HepG2 (cell line): ENCODE measurements at regions of chr14 and their contacts with region 1.

Region 1: DNA sequence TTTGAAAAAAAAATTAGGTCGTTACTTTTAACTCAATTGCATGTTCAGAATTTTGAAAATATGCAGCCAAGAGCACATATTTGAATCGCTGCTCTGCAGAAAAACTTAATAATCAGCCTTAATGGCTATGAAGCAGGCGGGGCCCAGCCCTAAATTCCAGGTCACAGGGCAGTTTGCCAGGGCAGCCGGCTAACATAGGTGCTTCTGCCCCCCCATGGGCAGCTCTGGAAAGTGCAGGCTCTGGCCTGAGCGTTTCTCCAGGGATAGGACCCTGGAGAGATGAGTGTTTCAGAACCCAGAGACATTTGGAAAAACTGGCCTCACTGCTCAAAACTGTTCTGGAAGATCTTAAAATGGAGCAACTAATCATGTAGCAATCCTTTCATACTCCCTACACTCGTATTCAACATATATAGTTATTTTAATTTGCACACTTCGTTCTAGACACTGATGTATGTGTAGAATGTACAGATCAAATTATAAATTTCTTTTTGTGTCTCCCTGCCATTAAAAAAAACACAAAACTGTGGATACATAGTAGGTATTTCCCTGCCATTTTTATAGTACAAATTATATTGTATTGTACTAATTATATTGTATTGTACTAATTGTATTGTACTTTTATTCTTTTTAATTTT is 26.0 kb upstream of the PTGR2 start:
- DNase-seq: peak; percentile 69
- ATAC-seq: peak; percentile 92
- H3K4me3 ChIP-seq: no peak overlapping the region
- H3K27ac ChIP-seq: no peak overlapping the region
- H3K4me1 ChIP-seq: peaks cover 15% of the 10 kb centered on the region
- H3K27me3 ChIP-seq: peaks cover 0 to 2% of the 10 kb centered on the region in 2 experiments; a peak in 2 of 5 replicates
- CTCF ChIP-seq: peak; percentile 90
- EP300 ChIP-seq: no peak
- POLR2A ChIP-seq: no peak
- RAD21 ChIP-seq: peak; percentile 94

Region 2: DNA sequence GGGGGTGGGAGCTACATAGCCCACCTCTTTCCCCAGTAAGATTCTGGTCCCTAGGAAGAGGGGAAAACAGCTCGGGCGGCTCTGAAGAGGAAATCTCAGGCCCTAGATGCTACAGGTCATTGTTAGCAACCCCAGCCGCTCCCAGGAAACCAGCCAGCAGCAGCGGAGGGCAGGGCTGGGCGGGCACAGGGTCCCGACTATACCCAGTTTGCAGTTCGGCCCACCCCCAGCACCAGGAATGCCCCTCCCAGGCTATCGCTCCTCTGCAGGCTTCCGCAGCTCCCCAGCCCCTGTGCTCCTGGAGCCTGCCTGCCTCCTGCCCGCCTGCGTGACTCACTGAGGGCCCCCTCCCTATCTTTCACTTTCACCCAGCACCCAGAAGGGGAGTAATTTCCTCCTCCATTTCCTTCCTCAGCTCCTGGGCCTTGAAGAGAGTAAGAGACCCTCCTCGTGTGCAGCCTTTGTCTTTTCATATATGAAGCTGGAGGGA is 84.2 kb before region 1 on chr14:
- CTCF ChIA-PET with region 1: interaction called, 3 read pairs
- POLR2A ChIA-PET with region 1: no interaction called
- in situ Hi-C with region 1: no loop called
- intact Hi-C with region 1: loop called (anchors 1 kb)
- DNase-seq: peak; percentile 61
- ATAC-seq: peak; percentile 72
- H3K4me3 ChIP-seq: peak overlapping the region; percentile 37 to 60 (median 41)
- H3K27ac ChIP-seq: peak overlapping the region; percentile 61
- H3K4me1 ChIP-seq: peaks cover 70% of the 10 kb centered on the region
- H3K27me3 ChIP-seq: no peaks in the 10 kb centered on the region
- CTCF ChIP-seq: peak; percentile 19; the same call in 1 of the 2 replicates
- EP300 ChIP-seq: no peak
- POLR2A ChIP-seq: no peak
- RAD21 ChIP-seq: no peak

Region 3: DNA sequence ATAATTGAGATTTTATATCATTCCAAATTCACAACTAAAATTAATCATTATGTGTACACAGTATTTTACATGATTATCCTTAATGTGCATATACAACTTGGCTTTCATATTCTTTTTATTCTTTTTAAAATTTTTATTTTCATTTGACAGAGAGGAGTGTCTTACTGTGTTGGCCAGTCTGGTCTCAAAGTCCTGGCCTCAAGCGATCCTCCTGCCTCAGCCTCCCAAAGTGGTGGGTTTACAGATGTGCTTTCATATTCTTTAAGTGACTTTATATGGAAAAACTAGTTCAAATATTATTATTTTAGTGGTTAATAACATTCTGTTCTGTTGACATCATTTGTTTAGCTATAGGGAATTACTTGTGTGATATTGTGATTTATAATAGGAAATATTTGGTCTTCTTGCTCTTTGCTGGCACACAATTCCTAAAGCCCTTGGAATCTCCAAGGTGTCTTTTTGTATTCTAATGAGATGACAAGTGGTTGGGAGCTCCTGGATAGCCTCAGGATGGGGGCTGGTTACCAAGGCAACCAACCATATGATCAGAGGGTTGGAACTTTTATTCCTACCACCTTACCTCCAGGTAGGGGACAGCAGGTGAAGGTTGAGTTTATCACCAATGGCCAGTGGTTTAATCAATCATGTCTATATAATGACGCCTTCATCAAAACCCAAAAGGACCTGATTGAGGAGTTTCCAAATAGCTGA is 45.0 kb after region 1 on chr14:
- CTCF ChIA-PET with region 1: no interaction called
- POLR2A ChIA-PET with region 1: no interaction called
- in situ Hi-C with region 1: no loop called
- intact Hi-C with region 1: no loop called
- DNase-seq: no peak
- ATAC-seq: no peak
- H3K4me3 ChIP-seq: no peak overlapping the region
- H3K27ac ChIP-seq: no peak overlapping the region
- H3K4me1 ChIP-seq: no peaks in the 10 kb centered on the region
- H3K27me3 ChIP-seq: no peaks in the 10 kb centered on the region
- CTCF ChIP-seq: no peak
- EP300 ChIP-seq: no peak
- POLR2A ChIP-seq: no peak
- RAD21 ChIP-seq: no peak

Region 4: DNA sequence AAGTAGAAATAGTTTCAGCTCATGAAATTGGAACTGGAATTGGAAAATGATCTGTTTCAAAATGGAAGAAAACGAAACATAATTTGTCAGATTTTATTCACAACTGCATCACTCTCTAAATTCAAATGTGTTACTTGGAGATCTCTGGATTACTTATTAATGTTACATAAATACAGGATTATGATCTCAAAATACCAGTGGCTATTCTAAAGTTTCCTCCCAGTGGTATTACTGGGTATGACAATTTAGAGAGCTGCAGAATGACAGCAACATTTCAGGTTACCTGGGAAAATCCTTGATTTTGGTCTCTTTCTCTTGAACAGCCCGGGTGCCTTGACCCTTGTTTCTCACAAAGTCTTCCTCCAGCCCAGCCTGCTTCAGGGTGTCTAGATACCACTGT is 110.0 kb after region 1 on chr14:
- CTCF ChIA-PET with region 1: no interaction called
- POLR2A ChIA-PET with region 1: no interaction called
- in situ Hi-C with region 1: no loop called
- intact Hi-C with region 1: no loop called
- DNase-seq: no peak
- ATAC-seq: peak; percentile 63
- H3K4me3 ChIP-seq: no peak overlapping the region
- H3K27ac ChIP-seq: no peak overlapping the region
- H3K4me1 ChIP-seq: peaks cover 6% of the 10 kb centered on the region
- H3K27me3 ChIP-seq: no peaks in the 10 kb centered on the region
- CTCF ChIP-seq: no peak
- EP300 ChIP-seq: no peak
- POLR2A ChIP-seq: no peak
- RAD21 ChIP-seq: no peak